ENCODE measurements at regions of chr4 and their contacts with region 1.

Region 1: GRCh38 chr4:88659055-88659889 is 38.4 kb downstream of the NAP1L5 start:
- DNase-seq: peak; percentile 61
- ATAC-seq: peak; percentile 81
- H3K4me3 ChIP-seq: no peak overlapping the region
- H3K27ac ChIP-seq: no peak overlapping the region
- H3K4me1 ChIP-seq: no peaks in the 10 kb centered on the region
- H3K27me3 ChIP-seq: no peaks in the 10 kb centered on the region
- CTCF ChIP-seq: peak; percentile 76

Region 2: DNA sequence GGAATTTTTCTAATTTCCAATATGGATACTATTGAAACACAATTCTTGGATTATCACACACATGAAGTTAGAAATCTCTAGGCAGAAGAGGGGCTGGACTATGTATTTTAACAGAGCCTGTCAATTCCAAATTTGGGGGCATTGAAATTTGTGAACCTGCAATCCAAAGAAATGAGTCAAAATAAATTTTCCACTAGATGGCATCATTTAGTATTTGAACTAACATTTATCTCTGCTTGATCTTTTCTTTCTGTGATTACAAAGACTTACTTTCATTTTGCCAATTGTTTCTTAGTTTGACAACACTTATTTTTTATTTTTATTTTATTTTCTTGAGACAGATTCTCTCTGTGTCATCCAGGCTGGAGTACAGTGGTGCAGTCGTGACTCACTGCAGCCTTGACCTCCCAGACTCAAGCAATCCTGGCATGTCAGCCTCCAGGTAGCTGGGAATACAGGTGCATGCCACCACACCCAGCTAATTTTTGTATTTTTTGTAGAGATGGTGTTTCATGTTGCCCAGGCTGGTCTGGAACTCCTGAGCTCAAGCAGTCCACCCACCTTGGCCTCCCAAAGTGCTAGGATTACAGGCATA is 133.0 kb before region 1 on chr4:
- CTCF ChIA-PET with region 1: no interaction called
- POLR2A ChIA-PET with region 1: no interaction called
- in situ Hi-C with region 1: no loop called
- intact Hi-C with region 1: loop called (anchors 2 kb)
- DNase-seq: no peak
- ATAC-seq: no peak
- H3K4me3 ChIP-seq: no peak overlapping the region
- H3K27ac ChIP-seq: no peak overlapping the region
- H3K4me1 ChIP-seq: peaks cover 3% of the 10 kb centered on the region
- H3K27me3 ChIP-seq: no peaks in the 10 kb centered on the region
- CTCF ChIP-seq: peak; percentile 28; the same call in 1 of the 2 replicates

Region 3: GRCh38 chr4:88823058-88823919 is 164.0 kb after region 1 on chr4:
- CTCF ChIA-PET with region 1: no interaction called
- POLR2A ChIA-PET with region 1: no interaction called
- in situ Hi-C with region 1: no loop called
- intact Hi-C with region 1: no loop called
- DNase-seq: peak; percentile 36
- ATAC-seq: peak; percentile 93
- H3K4me3 ChIP-seq: peak overlapping the region; percentile 43 to 67
- H3K27ac ChIP-seq: peak overlapping the region; percentile 29; the same call in 1 of the 2 replicates
- H3K4me1 ChIP-seq: no peaks in the 10 kb centered on the region
- H3K27me3 ChIP-seq: no peaks in the 10 kb centered on the region
- CTCF ChIP-seq: no peak

Measured in Panc1 (cell line).